G401 (cell line): ENCODE measurements at regions of chr11 and their contacts with region 1.

Region 1: GRCh38 chr11:64000026-64000739 is 13.9 kb downstream of the OTUB1 start:
- DNase-seq: peak; percentile 76

Region 2: DNA sequence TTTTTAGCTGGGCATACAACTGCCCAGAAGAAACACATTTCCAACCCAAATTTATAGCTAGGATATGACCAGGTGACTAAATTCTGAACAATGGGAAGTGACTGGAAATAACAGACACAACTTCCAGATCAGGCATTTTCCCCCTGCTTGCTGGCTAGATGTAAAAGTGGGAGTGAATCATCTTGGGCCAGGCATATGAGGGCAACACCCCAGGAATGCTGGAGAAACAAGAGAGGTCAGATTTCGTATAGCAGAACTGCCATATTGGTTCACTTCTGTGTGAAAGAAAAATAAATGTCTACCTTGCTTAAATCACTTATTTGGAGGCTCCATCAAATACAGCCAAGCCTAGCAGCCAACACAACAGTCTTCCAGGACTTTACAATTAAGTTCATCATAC is 336.4 kb before region 1 on chr11:
- in situ Hi-C with region 1: no loop called
- DNase-seq: no peak

Region 3: DNA sequence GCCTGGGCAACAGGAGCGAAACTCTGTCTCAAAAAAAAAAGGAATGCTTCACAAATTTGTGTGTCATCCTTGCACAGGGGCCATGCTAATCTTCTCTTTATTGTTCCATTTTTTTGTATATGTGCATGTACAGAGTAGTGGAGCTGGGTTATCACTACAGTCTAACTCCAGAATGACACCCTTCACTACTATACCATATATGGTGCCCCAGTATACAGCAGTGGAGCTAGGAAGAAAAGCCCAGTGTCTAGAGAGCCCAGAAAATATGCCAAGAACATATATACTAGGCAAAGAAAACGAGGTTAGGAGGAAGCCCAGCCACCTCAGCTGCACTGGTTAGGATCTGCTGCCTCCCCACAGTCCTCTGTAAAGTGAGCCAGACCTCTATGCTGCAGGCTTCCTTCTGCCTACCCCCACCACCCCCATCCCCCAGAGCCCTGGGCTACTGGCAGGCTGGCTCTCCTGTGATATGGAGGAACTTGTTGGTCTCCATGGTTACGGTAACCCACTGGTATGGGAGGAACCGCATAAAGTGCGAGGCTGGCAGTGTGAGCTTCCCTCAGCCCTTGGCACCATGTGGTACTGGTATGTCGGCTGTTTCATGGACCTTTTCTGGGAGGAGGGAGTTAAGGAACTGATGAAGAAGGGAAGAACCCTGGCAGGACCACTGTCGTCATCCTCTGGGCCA is 117.5 kb before region 1 on chr11:
- in situ Hi-C with region 1: no loop called
- DNase-seq: no peak

Region 4: DNA sequence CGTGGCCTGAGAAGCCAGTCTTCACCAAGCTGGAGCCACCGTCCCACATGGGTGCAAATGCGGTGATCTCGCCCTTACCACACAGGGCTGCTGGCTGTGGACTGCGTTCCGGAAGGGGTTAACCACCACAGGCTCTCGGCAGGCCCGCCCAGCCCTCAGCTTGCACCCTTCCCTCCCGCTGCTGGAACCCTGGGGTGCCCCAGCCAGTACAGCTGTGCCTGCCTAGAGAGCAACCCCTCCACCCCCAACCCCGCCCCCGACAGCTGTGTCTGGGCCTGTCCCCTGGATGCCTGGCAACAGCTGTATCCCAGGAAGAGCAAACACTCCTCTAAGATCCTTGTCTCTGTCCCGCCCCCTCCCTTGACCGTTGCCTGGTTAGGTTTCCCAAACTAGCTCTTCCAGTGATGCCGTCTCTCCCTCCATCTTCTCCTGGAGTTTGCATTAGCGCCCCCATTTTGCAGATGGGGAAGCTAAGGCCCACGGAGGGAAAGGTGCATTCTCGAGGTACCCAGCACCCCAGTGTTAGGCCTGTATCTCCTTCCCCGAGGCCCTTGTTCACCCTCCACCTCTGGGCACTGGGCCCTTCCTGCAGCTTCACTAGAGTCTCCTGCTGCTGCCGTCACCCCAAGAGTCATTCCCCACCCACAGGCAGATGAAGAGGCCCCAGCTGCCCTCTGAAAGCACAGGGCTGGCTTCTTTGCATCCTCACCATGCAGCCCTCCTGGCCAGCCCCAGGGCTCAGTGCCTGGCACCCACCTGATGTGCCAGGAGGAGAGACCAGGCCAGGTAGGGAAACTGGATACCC is 38.4 kb before region 1 on chr11:
- in situ Hi-C with region 1: no loop called
- DNase-seq: no peak

Region 5: DNA sequence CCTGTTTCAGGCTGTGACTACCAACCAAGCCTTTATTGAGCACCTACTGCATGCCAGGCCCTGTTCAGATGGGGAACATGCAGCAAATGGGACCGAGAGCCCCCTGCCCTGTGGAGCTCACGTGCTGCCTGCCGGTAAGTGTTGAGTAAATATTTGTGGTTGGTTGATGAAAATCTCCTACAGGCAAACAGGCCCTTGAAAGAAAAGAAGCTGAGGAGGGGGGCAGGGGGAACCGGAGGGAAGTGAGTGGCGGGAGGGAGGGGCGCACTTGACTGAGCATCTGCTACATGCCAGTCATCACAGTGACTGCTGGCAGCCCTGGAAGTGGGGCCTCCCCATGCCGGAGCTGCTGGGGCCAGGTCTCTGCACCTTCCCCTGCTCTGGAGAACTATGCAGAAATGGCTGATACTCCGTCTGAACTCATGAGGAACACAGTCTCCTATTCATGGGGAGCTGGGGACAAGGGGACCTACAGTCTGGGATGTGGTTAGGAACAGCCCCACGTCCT is 131.6 kb after region 1 on chr11:
- in situ Hi-C with region 1: loop called (anchors 10 kb)
- DNase-seq: no peak

Region 6: GRCh38 chr11:64165849-64166635 is 165.9 kb after region 1 on chr11 and contains the start of gene MACROD1:
- in situ Hi-C with region 1: loop called (anchors 10 kb)
- DNase-seq: peak; percentile 78
- total RNA-seq, gene MACROD1: 85.0 and 93.2 TPM in 2 replicates